ENCODE measurements at regions of chr11 and their contacts with region 1.

Region 1: GRCh38 chr11:129374993-129375750 is 476 bp upstream of the BARX2 start:
- DNase-seq: peak in 1 of 3 donors; percentile 58
- ATAC-seq: peak in 1 of 2 donors; percentile 33
- H3K4me3 ChIP-seq: peak overlapping the region; percentile 41
- H3K27ac ChIP-seq: no peak overlapping the region
- H3K4me1 ChIP-seq: peaks cover 2% of the 10 kb centered on the region
- H3K27me3 ChIP-seq: peaks cover 5% of the 10 kb centered on the region

Region 2: GRCh38 chr11:129427376-129427775 is 52.2 kb after region 1 on chr11:
- intact Hi-C with region 1: no loop called
- DNase-seq: no peak
- ATAC-seq: no peak
- H3K4me3 ChIP-seq: no peak overlapping the region
- H3K27ac ChIP-seq: no peak overlapping the region
- H3K4me1 ChIP-seq: no peaks in the 10 kb centered on the region
- H3K27me3 ChIP-seq: no peaks in the 10 kb centered on the region

Region 3: DNA sequence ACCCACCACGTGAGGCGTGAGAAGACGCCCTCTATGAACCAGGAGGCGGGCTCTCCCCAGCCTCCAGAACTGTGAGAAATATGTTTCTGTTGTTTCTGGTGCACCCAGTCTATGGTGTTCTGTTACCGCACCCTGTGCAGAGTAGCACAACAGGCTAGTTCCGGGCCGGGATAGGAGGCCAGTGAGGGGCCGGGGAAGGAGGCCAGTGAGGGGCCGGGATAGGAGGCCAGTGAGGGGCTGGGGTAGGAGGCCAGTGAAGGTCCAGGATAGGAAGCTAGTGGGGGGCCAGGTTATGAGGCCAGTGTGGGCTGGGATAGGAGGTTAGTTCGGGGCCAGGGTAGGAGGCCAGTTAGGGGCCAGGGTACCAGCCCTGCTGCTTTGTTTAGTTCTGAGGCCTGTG is 205.1 kb after region 1 on chr11:
- intact Hi-C with region 1: no loop called
- DNase-seq: no peak
- ATAC-seq: peak; percentile 53 to 83
- H3K4me3 ChIP-seq: no peak overlapping the region
- H3K27ac ChIP-seq: no peak overlapping the region
- H3K4me1 ChIP-seq: no peaks in the 10 kb centered on the region
- H3K27me3 ChIP-seq: no peaks in the 10 kb centered on the region

Region 4: DNA sequence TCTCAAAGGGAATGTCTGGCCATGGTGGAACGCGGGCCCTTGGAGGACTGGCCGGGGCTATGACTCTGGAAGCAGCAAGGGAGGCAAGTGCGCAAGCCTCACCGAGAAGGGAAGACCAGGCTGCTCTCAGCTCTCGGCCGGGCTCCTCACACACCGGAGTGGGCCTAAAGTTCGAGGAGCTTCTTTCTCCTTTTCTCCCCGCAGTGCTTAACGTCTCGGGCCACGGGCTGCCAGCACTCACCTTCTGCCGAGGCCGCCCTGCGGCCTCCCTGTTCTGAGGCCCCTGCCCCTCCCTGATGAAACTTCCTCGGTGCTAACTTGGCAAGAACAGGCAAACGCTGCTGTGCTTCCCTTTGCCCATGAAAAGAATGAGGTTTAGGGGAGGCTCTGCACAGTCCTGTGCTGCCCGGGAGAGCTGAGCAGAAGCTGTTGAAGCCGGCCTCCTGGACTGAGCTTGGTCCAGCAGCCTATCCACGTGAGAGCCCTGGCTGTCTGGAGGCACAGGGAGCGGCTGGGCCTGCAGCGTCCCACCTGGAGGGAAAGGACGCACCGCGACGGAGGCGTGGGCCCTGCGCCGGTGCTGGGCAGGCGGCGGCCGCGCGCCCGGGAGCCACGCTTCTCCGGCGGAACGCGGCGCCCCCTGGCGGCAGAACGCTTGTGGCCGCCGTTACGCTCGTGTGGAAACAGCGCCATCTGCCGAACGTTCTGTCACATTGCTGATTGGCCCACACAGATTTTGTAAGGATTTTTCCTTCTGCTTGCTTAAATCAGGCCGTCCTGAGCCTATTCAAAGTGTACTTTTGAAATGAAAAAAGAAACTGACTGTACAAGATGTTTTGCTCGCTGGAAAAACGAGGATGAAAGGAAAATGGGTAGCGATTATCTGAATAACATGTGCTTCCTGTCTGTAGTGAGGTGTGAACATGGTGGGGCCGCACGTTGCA is 375.4 kb after region 1 on chr11:
- intact Hi-C with region 1: loop called in 1 of 4 experiments (anchors 5 kb)
- DNase-seq: peak; percentile 74 to 88 (median 84)
- ATAC-seq: peak; percentile 83 to 93
- H3K4me3 ChIP-seq: peak overlapping the region; percentile 24
- H3K27ac ChIP-seq: no peak overlapping the region
- H3K4me1 ChIP-seq: no peaks in the 10 kb centered on the region
- H3K27me3 ChIP-seq: no peaks in the 10 kb centered on the region